ENCODE measurements at regions of chr2 and their contacts with region 1.

Region 1: DNA sequence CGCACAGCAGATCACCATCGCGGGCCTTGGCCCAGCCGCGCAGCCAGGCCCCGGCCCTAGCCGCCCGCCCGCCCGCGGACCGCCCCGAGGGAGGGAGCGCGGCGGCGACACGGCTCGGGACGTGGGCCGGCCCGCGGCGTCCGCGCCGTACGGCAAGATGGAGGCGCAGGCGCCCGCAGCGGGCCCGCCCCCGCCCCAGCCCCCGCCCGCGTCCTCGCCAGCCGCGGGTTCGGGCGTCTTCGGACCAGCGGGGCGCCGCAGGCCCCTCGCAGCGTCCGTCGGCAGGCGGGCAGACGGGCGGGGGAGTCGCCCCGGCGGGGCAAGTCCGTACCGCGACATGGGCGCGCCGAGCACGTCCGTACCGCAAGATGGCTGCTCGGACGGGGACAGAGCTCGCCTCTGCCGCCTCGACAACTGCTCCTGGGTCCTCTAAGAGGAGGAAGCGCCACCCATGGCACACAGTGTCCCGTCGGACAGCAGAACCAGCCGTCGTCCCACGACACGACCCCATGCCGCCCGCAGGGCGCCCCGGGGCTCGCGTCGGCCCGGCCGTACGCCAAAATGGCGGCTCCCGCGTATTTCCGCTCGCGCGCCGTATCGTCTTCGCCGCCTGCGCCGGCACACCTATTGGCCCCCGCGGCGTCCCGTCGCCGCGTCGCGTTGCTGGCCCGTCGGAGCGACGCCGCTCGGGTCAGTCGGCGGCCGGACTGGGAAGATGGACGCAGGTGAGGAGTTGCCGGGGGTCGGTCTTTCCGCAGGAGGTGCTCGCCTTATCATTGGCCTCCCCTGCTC is at the starts of genes ATG4B and THAP4:
- DNase-seq: peak; percentile 78
- ATAC-seq: peak; percentile 79
- H3K4me3 ChIP-seq: peak within 1 kb of the TSS; percentile 72 to 80
- H3K27ac ChIP-seq: peak within 1 kb of the TSS; percentile 88
- H3K4me1 ChIP-seq: peaks cover 7 to 24% of the 10 kb centered on the region in 2 experiments; a peak in 3 of 4 replicates
- H3K27me3 ChIP-seq: no peaks in the 10 kb centered on the region
- CTCF ChIP-seq: no peak
- POLR2A ChIP-seq: no peak
- RAD21 ChIP-seq: no peak
- total RNA-seq, gene ATG4B: 87.4 TPM
- total RNA-seq, gene THAP4: 71.2 TPM

Region 2: DNA sequence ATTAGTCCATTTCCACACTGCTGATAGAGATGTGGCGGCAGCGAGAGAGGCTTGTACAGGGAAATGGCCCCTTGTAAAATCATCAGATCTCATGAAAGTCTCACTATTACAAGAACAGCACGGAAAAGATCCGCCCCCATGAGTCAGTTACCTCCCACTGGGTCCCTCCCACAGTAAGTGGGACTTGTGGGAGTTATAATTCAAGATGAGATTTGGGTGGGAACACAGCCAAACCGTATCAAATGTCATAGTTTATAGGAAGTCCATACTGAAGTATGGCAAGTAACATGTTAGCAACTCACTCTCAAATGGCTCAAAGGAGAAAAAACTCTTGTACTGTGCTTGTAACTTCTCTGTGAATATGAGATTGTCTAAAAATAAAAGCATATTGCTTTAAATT is 225.1 kb before region 1 on chr2:
- CTCF ChIA-PET with region 1: no interaction called
- POLR2A ChIA-PET with region 1: no interaction called
- RAD21 ChIA-PET with region 1: no interaction called
- intact Hi-C with region 1: no loop called
- DNase-seq: peak; percentile 16
- ATAC-seq: peak; percentile 76
- H3K4me3 ChIP-seq: no peak overlapping the region
- H3K27ac ChIP-seq: no peak overlapping the region
- H3K4me1 ChIP-seq: peaks cover 3 to 20% of the 10 kb centered on the region in 2 experiments
- H3K27me3 ChIP-seq: no peaks in the 10 kb centered on the region
- CTCF ChIP-seq: no peak
- POLR2A ChIP-seq: no peak
- RAD21 ChIP-seq: no peak

Region 3: DNA sequence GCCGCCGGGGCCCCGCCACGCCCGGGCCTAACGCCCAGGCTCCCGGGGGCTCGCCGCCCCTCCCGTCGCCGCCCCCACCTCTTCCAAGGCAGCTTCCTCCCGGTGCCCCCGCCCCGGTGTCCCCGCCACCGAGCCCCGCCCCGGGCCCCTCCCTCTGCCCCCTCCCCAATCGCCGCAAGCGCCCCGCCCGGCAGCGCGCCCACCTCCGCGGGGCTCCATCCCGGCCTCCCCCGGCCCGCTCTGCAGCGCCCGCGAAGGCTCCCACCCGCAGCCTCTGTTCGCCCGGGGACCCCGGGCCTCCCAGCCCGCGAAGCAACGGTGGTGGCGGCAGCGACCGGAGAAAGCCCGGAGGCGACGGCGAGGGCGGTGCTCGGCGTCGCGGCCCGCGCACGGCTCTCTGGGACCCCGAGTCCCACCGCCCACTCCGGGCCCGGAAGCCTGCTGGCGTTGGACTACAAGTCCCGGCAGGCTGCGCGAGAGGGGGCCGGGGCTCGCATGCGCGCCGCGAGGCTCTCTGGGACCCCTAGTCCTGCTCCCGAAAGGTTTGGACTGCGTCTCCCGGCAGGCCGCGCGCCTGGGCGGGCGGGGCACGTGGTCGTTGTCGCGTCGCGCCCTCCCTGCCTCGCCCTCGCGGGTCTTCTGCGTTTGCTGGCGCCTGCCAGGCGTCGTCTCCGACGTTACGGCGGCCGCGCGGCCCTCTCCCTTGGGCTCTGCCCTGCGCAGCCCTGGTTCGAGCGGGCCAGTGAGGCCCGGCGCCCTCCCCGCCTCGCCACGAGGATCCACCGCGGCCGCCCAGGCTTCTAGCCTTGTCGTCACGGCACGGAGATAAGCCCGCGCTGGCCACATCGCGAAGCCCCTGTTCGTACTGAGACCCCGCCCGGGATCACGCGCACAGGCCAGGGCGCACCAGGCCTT is 128.7 kb before region 1 on chr2 and contains the start of gene STK25:
- CTCF ChIA-PET with region 1: no interaction called
- POLR2A ChIA-PET with region 1: no interaction called
- RAD21 ChIA-PET with region 1: no interaction called
- intact Hi-C with region 1: loop called (anchors 5 kb)
- DNase-seq: peak; percentile 94
- ATAC-seq: peak; percentile 91
- H3K4me3 ChIP-seq: peak within 1 kb of the TSS; percentile 87 to 95
- H3K27ac ChIP-seq: peak within 1 kb of the TSS; percentile 82
- H3K4me1 ChIP-seq: peaks cover 12 to 24% of the 10 kb centered on the region in 2 experiments
- H3K27me3 ChIP-seq: 0 out of 2 replicates have a peak, but pooled peaks cover 3% of the 10 kb centered on the region
- CTCF ChIP-seq: no peak
- POLR2A ChIP-seq: no peak
- RAD21 ChIP-seq: no peak
- total RNA-seq, gene STK25: 160 TPM

Region 4: GRCh38 chr2:241558532-241559322 is 78.5 kb before region 1 on chr2 and contains the start of gene BOK:
- CTCF ChIA-PET with region 1: no interaction called
- POLR2A ChIA-PET with region 1: no interaction called
- RAD21 ChIA-PET with region 1: interaction called in 1 of 2 experiments, 3 read pairs
- intact Hi-C with region 1: loop called (anchors 5 kb)
- DNase-seq: peak; percentile 72
- ATAC-seq: peak; percentile 77
- H3K4me3 ChIP-seq: peak within 1 kb of the TSS; percentile 67 to 79
- H3K27ac ChIP-seq: peak within 1 kb of the TSS; percentile 95
- H3K4me1 ChIP-seq: peaks cover 29 to 56% of the 10 kb centered on the region in 2 experiments; a peak in 3 of 4 replicates
- H3K27me3 ChIP-seq: no peaks in the 10 kb centered on the region
- CTCF ChIP-seq: no peak
- POLR2A ChIP-seq: peak; percentile 31
- RAD21 ChIP-seq: no peak
- total RNA-seq, gene BOK: 41.5 TPM

Region 5: DNA sequence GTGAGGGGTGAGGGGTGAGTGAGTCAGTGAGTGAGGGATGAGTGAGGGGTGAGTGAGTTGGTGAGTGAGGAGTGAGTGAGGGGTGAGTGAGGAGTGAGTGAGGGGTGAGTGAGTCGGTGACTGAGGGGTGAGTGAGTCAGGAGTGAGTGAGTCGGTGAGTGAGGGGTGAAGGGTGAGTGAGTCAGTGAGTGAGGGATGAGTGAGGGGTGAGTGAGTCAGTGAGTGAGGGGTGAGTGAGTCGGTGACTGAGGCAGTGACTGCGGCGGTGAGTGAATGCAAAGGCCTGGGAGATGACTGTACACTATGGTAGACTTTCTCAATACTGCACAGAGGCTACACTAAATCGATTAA is 16.8 kb before region 1 on chr2:
- CTCF ChIA-PET with region 1: no interaction called
- POLR2A ChIA-PET with region 1: no interaction called
- RAD21 ChIA-PET with region 1: no interaction called
- intact Hi-C with region 1: no loop called
- DNase-seq: peak; percentile 33
- ATAC-seq: peak; percentile 56
- H3K4me3 ChIP-seq: no peak overlapping the region
- H3K27ac ChIP-seq: 0 out of 2 replicates have a peak overlapping the region, but pooled peaks have one; percentile 27
- H3K4me1 ChIP-seq: peaks cover 0 to 35% of the 10 kb centered on the region in 2 experiments; a peak in 2 of 4 replicates
- H3K27me3 ChIP-seq: no peaks in the 10 kb centered on the region
- CTCF ChIP-seq: no peak
- POLR2A ChIP-seq: no peak
- RAD21 ChIP-seq: no peak

Measured in HCT116 (cell line).